ENCODE measurements at regions of chr15 and their contacts with region 1.

Region 1: DNA sequence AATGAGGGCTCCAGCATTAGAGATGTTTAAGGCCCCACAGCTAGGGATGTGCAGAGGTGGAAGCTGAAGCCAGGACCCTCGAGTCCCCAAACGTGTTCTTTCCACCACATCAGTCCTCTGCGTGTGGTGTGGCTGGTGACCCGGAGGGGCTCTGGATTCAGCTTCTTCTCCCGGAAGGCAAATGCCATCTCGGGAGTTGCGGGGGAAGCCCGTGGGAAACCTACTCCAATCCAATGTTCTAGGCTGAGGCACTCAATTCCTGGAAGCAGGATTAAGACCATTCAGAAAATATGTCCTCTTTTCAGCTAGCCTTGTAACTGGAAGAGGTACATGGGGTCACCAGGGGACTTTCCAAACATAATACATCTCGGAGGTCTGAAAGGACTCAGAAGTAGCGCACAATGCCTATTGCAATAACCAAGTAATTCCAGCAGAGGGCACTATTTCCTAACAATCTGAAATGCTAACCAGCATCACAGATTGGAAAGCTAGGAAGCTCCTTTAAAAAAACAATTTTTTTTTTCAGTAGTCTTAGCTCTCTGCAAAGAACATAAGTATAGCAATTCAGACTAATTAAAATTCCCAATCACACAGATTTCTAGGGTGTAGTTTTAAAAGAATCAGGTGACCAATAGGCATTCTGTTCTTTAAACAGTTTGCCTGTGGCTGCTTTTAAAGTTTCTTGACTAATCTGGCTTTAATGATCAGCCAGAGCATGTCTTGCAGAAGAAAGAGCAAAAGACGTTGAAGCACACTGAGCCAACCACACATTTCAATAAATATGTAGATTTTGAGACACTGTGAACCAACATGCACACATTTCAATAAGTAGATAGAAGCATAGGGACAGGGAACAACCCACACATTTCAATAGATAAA is 36.1 kb downstream of the BNC1 start:
- DNase-seq: peak; percentile 68
- ATAC-seq: peak; percentile 91
- H3K4me3 ChIP-seq: no peak overlapping the region
- H3K27ac ChIP-seq: no peak overlapping the region
- H3K4me1 ChIP-seq: no peaks in the 10 kb centered on the region
- H3K27me3 ChIP-seq: peaks cover 9% of the 10 kb centered on the region; the same call in 1 of the 2 replicates
- CTCF ChIP-seq: peak; percentile 95
- POLR2A ChIP-seq: 0 out of 2 replicates have a peak, but pooled peaks have one; percentile 30
- RAD21 ChIP-seq: peak; percentile 92

Region 2: DNA sequence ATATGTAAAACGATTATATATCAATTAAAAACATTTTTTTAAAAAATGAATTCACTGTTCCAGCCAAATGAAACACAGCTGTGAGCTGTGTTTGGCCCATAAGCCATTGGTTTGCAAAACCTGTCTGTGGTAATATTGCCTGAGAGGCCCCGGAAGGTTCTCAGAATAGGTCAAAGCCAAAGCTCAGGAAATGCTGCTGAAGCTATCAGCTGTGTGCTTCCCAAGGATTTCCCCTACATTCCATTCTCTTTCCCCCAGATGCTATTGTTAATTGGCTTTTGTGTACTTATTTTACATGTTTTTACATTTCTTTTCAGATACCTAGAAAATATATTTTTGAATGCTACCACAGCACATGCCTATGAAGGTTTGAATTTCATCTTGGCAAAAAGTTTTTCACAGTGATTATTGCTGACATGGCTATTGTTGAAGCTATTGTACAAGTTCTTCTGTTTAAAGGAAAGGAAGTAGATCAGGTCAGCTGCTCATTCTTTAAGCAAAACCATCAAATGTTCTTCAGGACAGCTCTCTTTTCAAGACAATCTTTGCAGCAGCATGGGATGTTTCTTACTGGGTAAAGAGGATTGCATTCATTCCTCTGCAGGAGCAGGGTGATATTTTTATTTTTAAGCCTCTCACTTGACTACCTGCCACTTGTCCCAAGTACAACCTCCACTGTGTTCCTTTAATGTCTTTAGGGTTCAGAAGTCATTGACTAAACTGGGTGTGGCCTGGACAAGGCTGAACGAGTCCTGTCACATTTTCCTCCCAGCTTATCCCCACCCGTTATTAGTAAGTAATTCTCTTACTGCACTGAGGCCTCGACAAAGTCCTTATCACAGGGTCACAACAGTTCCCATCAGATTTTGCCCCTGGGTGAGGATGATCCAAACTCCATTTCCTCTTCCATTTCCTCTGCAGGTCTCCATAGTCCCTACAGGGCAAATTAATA is 62.4 kb after region 1 on chr15:
- CTCF ChIA-PET with region 1: no interaction called
- POLR2A ChIA-PET with region 1: no interaction called
- dilution Hi-C with region 1: no loop called
- in situ Hi-C with region 1: loop called (anchors 10 kb)
- intact Hi-C with region 1: no loop called
- DNase-seq: no peak
- ATAC-seq: no peak
- H3K4me3 ChIP-seq: no peak overlapping the region
- H3K27ac ChIP-seq: no peak overlapping the region
- H3K4me1 ChIP-seq: peaks cover 3% of the 10 kb centered on the region; the same call in 1 of the 2 replicates
- H3K27me3 ChIP-seq: no peaks in the 10 kb centered on the region; the same call in 1 of the 2 replicates
- CTCF ChIP-seq: no peak
- POLR2A ChIP-seq: no peak
- RAD21 ChIP-seq: no peak

Region 3: DNA sequence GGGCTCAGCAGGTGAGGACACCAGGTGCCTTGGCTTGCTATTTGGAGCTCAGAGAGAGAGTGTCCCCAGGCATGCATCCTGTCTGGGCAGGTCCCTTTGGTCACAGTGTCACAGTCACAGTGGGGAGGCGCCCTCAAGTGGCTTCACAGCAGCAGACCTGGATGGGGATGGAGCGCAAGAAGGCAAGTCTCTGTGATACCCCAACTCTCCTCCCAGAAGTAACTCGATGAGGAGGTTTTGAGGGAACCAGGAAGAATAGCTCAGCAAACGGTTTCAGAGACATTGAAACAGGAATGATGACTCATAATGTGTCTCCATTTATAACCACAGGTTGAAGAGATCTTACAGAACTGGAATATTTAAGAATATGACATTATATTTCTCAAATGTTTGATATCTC is 132.3 kb after region 1 on chr15:
- CTCF ChIA-PET with region 1: interaction called, 8 read pairs
- POLR2A ChIA-PET with region 1: no interaction called
- dilution Hi-C with region 1: no loop called
- in situ Hi-C with region 1: no loop called
- intact Hi-C with region 1: loop called (anchors 1 kb)
- DNase-seq: peak; percentile 26
- ATAC-seq: peak; percentile 67; the same call in 1 of the 2 replicates
- H3K4me3 ChIP-seq: no peak overlapping the region
- H3K27ac ChIP-seq: no peak overlapping the region
- H3K4me1 ChIP-seq: no peaks in the 10 kb centered on the region
- H3K27me3 ChIP-seq: peaks cover 5% of the 10 kb centered on the region; the same call in 1 of the 2 replicates
- CTCF ChIP-seq: peak; percentile 28; the same call in 1 of the 2 replicates
- POLR2A ChIP-seq: no peak
- RAD21 ChIP-seq: peak; percentile 34; the same call in 1 of the 2 replicates

Region 4: DNA sequence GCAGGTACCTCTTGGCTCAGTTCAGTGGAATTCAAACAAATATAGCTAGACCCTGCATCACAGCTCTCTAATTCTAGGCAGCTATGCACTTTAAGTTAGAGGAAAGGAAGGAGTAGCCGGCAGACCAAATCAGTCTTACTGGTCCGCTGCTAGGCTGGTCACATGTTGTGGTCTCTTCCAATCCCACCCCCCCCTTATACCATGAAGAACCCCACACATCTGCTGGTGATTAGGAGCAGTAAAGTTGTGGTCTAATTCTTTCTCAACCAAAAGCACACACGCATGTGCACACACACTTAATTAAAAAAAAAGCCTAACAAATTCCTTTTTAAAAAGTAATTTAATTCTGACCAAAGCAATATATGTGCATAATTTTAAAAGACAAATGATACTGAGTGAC is 182.1 kb after region 1 on chr15:
- CTCF ChIA-PET with region 1: interaction called, 25 read pairs
- POLR2A ChIA-PET with region 1: no interaction called
- dilution Hi-C with region 1: no loop called
- in situ Hi-C with region 1: loop called (anchors 5 kb)
- intact Hi-C with region 1: no loop called
- DNase-seq: no peak
- ATAC-seq: no peak
- H3K4me3 ChIP-seq: no peak overlapping the region
- H3K27ac ChIP-seq: no peak overlapping the region
- H3K4me1 ChIP-seq: no peaks in the 10 kb centered on the region
- H3K27me3 ChIP-seq: no peaks in the 10 kb centered on the region
- CTCF ChIP-seq: no peak
- POLR2A ChIP-seq: no peak
- RAD21 ChIP-seq: no peak

Region 5: GRCh38 chr15:83436458-83437158 is 188.2 kb after region 1 on chr15:
- CTCF ChIA-PET with region 1: interaction called, 25 read pairs
- POLR2A ChIA-PET with region 1: no interaction called
- dilution Hi-C with region 1: no loop called
- in situ Hi-C with region 1: loop called (anchors 5 kb)
- intact Hi-C with region 1: loop called (anchors 1 kb)
- DNase-seq: peak; percentile 52
- ATAC-seq: peak; percentile 83
- H3K4me3 ChIP-seq: no peak overlapping the region
- H3K27ac ChIP-seq: no peak overlapping the region
- H3K4me1 ChIP-seq: no peaks in the 10 kb centered on the region
- H3K27me3 ChIP-seq: no peaks in the 10 kb centered on the region; the same call in 1 of the 2 replicates
- CTCF ChIP-seq: peak; percentile 58
- POLR2A ChIP-seq: no peak
- RAD21 ChIP-seq: peak; percentile 63

Region 6: DNA sequence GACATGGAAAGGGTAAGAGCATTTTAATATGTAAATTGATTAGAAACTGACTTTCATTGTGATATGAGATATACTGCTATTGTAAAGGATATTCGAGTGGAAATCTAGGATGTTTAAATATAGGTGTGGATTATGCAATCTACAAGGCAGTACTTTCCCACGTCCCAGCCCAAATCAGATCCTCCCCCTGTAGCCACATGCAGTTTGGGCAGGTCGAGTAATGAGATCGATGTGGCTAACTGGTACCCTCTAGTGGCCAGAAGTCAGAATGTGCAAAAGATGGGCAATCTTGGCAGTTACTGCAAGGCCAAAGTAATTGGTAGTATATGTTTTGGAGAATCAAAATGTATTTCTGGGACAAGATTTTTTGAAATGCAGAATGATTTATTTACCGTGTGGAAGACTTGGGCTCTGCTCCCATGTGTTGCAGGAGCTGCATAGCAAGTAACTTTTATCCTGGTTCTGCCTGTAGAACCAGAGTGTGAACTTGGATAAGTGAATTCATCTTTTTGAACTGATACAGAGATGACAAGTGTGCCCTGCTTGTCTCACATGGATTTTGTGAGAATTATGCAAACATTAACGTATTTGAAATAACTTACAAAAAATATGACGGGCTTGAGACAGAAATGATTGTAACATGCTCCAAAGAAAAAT is 311.0 kb after region 1 on chr15:
- CTCF ChIA-PET with region 1: interaction called, 27 read pairs
- POLR2A ChIA-PET with region 1: no interaction called
- dilution Hi-C with region 1: loop called (anchors 25 kb)
- in situ Hi-C with region 1: loop called (anchors 5 kb)
- intact Hi-C with region 1: loop called (anchors 1 kb)
- DNase-seq: peak; percentile 61
- ATAC-seq: peak; percentile 92
- H3K4me3 ChIP-seq: no peak overlapping the region
- H3K27ac ChIP-seq: no peak overlapping the region
- H3K4me1 ChIP-seq: no peaks in the 10 kb centered on the region
- H3K27me3 ChIP-seq: no peaks in the 10 kb centered on the region; the same call in 1 of the 2 replicates
- CTCF ChIP-seq: peak; percentile 71
- POLR2A ChIP-seq: no peak
- RAD21 ChIP-seq: peak; percentile 81

Region 7: GRCh38 chr15:84023636-84024035 is 775.2 kb after region 1 on chr15:
- CTCF ChIA-PET with region 1: no interaction called
- POLR2A ChIA-PET with region 1: no interaction called
- dilution Hi-C with region 1: no loop called
- in situ Hi-C with region 1: loop called (anchors 25 kb)
- intact Hi-C with region 1: no loop called
- DNase-seq: peak; percentile 45
- ATAC-seq: no peak
- H3K4me3 ChIP-seq: no peak overlapping the region
- H3K27ac ChIP-seq: no peak overlapping the region
- H3K4me1 ChIP-seq: no peaks in the 10 kb centered on the region
- H3K27me3 ChIP-seq: no peaks in the 10 kb centered on the region
- CTCF ChIP-seq: peak; percentile 36
- POLR2A ChIP-seq: no peak
- RAD21 ChIP-seq: peak; percentile 43